ENCODE measurements at regions of chr6 and their contacts with region 1.

Region 1: DNA sequence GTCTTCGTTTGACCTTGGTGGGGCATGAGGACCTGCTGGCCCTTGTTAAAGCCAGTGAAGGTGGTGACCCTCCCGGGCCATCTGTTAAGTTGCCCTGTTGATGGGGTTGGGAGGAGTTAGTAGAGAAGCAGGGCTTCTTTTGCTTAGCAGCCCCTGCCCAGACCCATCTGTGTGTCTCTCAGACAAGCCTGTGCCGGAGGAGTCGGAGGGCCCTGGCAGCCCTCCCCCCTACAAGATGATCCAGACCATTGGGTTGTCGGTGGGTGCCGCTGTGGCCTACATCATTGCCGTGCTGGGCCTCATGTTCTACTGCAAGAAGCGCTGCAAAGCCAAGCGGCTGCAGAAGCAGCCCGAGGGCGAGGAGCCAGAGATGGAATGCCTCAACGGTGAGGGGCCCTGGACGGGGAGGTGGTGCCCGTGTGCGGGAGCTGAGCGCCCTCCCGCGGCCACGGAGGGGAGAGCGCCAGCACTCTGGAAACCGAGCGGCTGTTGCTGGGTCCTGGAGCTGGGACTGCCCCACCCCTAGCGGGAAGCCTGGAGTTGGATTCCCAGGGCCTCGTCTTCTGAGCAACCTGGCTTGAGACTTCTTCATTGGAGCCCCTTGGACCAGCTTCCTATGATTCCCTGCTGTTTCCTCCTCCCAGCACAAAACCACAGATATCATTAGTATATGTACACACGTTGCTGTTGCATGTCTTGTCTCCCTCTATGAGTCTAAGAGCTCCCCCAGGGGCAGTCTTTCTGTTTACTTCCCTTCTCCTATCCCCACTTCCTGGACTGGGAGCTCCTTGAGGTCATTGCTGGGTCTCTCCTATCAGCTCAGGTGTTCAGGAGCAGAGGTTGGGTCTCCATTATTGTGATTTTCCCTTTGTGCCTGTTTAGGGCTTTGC is 27.6 kb upstream of the SRF start:
- DNase-seq: peak; percentile 94
- ATAC-seq: peak; percentile 94
- H3K4me3 Mint-ChIP-seq: peak overlapping the region; percentile 14; the same call in 1 of the 2 replicates
- H3K27ac Mint-ChIP-seq: peak overlapping the region; percentile 90
- H3K4me1 Mint-ChIP-seq: peaks cover 10% of the 10 kb centered on the region
- H3K27me3 Mint-ChIP-seq: no peaks in the 10 kb centered on the region; the same call in 1 of the 2 replicates
- CTCF ChIP-seq: peak; percentile 92

Region 2: GRCh38 chr6:43013843-43014433 is 129.5 kb before region 1 on chr6 and contains the starts of genes KLHDC3 and MEA1:
- CTCF ChIA-PET with region 1: interaction called, 22 read pairs
- POLR2A ChIA-PET with region 1: interaction called, 4 read pairs
- DNase-seq: peak; percentile 99
- ATAC-seq: peak; percentile 93
- H3K4me3 Mint-ChIP-seq: peak within 1 kb of the TSS; percentile 99
- H3K27ac Mint-ChIP-seq: peak within 1 kb of the TSS; percentile 95
- H3K4me1 Mint-ChIP-seq: peaks cover 28% of the 10 kb centered on the region
- H3K27me3 Mint-ChIP-seq: no peaks in the 10 kb centered on the region
- CTCF ChIP-seq: no peak
- total RNA-seq, gene KLHDC3: 157 to 172 TPM (median 169 TPM) in 3 replicates
- total RNA-seq, gene MEA1: 85.0 to 91.2 TPM (median 86.5 TPM) in 3 replicates

Region 3: GRCh38 chr6:43053545-43054205 is 89.8 kb before region 1 on chr6 and contains the start of gene CUL7:
- CTCF ChIA-PET with region 1: interaction called, 24 read pairs
- POLR2A ChIA-PET with region 1: interaction called, 8 read pairs
- DNase-seq: peak; percentile 86
- ATAC-seq: peak; percentile 93
- H3K4me3 Mint-ChIP-seq: peak within 1 kb of the TSS; percentile 91
- H3K27ac Mint-ChIP-seq: peak within 1 kb of the TSS; percentile 95
- H3K4me1 Mint-ChIP-seq: peaks cover 30% of the 10 kb centered on the region
- H3K27me3 Mint-ChIP-seq: no peaks in the 10 kb centered on the region
- CTCF ChIP-seq: no peak
- total RNA-seq, gene CUL7: 20.8 to 27.9 TPM (median 27.0 TPM) in 3 replicates

Region 4: GRCh38 chr6:43075670-43076463 is 67.6 kb before region 1 on chr6 and contains the start of gene PTK7:
- CTCF ChIA-PET with region 1: interaction called, 50 read pairs
- POLR2A ChIA-PET with region 1: interaction called, 10 read pairs
- DNase-seq: peak; percentile 86
- ATAC-seq: peak; percentile 73
- H3K4me3 Mint-ChIP-seq: peak within 1 kb of the TSS; percentile 84
- H3K27ac Mint-ChIP-seq: no peak within 1 kb of the TSS
- H3K4me1 Mint-ChIP-seq: peaks cover 38% of the 10 kb centered on the region
- H3K27me3 Mint-ChIP-seq: no peaks in the 10 kb centered on the region; the same call in 1 of the 2 replicates
- CTCF ChIP-seq: no peak
- total RNA-seq, gene PTK7: 151 to 165 TPM (median 160 TPM) in 3 replicates

Region 5: GRCh38 chr6:43096451-43097097 is 46.9 kb before region 1 on chr6:
- CTCF ChIA-PET with region 1: interaction called, 11 read pairs
- POLR2A ChIA-PET with region 1: no interaction called
- DNase-seq: peak; percentile 51
- ATAC-seq: peak; percentile 81
- H3K4me3 Mint-ChIP-seq: peak overlapping the region; percentile 10
- H3K27ac Mint-ChIP-seq: peak overlapping the region; percentile 97
- H3K4me1 Mint-ChIP-seq: peaks cover 64% of the 10 kb centered on the region
- H3K27me3 Mint-ChIP-seq: no peaks in the 10 kb centered on the region
- CTCF ChIP-seq: no peak

Region 6: DNA sequence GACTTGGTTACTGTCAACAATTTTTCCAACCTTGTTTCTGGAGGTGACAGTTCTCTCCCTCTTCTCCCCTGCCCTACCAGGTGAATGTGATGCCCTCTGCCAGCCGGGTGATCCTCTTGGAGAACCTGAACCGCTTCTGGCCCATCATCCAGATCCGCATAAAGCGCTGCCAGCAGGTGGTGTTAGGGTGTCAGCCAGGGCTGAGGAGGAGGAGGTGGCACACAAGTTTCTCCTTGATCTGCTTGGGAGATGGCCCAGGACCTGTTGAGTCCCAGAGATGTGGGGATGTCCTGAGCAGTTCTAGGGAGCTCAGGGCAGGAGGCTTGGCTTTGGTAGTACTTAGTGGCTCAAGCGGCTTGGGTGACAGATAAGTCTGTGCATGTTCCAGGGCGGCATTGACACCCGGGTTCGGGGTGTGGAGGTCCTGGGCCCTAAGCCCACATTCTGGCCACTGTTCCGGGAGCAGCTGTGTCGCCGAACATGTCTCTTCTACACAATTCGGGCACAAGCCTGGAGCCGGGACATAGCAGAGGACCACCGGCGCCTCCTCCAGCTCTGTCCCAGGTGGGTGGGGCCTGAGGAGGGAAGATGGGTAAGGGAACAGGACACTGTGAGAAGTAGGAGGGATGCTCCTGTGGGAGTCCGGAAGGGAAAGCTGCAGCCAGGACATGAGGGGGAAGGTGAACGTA is 59.7 kb after region 1 on chr6:
- CTCF ChIA-PET with region 1: no interaction called
- POLR2A ChIA-PET with region 1: no interaction called
- DNase-seq: no peak
- ATAC-seq: no peak
- H3K4me3 Mint-ChIP-seq: no peak overlapping the region
- H3K27ac Mint-ChIP-seq: no peak overlapping the region
- H3K4me1 Mint-ChIP-seq: no peaks in the 10 kb centered on the region
- H3K27me3 Mint-ChIP-seq: no peaks in the 10 kb centered on the region; the same call in 1 of the 2 replicates
- CTCF ChIP-seq: no peak